Left cardiac atrium (tissue), 4 donors: ENCODE measurements at regions of chr3 and their contacts with region 1.

Region 1: DNA sequence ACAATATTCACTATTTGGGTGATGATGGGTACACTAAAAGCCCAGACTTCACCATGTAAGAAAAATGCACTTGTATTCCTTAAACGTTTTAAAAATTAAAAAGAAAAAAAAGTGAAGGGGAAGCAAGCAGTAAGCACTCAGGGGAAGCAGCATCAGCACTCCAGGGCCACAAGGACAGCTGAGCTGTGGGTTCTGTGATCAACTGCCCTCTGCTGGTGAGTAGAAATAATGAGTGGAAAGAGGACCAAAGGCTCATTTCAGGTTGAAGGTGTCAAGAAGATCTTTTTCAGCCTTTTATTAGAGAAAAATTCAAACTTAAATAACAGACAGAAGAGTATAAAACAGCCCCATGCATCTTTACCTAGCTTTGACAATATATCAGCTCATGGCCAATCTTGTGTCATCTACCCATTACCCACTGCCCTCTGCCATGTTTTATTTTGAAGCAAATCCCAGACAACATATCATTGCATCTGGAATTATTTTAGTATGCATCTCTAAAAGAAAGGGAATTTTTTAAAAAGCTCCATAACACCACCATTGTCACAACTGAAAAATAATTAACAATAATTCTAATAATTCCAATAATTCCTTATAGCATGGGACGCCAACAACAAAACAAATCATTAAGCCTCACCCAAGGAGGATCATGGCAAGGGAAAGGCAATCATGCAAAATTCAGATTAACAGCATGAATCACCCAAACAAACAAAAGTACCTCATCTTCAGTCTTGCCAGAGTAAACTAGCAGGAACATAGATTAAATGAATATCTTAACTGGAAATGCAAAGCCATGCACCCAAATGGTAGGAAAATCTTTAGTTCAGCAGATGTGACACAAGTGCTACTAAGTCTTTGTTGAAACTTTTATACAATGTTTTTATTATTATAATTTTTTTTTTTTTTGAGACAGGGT is 42.5 kb downstream of the TAMM41 start:
- DNase-seq: peak; percentile 34
- ATAC-seq: peak; percentile 50 to 78

Region 2: GRCh38 chr3:11379233-11379823 is 424.9 kb before region 1 on chr3:
- intact Hi-C with region 1: loop called (anchors 2 to 5 kb)
- DNase-seq: no peak
- ATAC-seq: peak; percentile 70 to 78

Region 3: DNA sequence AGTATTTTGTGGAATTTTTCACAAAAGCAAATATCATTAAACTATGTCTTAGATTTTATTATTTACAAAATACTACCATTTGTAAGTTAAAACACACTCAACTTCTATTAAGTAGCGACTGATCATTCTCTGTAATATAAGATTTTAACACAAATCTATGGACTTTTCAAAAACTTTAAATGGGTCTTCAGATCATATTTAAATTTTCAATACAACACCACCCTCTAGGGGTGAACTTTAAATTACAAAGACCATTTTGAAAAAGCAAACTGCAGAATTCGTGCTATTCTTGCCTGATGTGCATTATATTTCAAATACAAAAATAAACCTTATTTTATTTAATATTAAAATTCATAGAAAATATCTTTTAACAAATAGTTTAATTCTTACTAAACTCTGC is 152.3 kb before region 1 on chr3:
- intact Hi-C with region 1: loop called in 1 of 2 experiments (anchors 5 kb)
- DNase-seq: no peak
- ATAC-seq: peak in 1 of 2 donors; percentile 27

Region 4: DNA sequence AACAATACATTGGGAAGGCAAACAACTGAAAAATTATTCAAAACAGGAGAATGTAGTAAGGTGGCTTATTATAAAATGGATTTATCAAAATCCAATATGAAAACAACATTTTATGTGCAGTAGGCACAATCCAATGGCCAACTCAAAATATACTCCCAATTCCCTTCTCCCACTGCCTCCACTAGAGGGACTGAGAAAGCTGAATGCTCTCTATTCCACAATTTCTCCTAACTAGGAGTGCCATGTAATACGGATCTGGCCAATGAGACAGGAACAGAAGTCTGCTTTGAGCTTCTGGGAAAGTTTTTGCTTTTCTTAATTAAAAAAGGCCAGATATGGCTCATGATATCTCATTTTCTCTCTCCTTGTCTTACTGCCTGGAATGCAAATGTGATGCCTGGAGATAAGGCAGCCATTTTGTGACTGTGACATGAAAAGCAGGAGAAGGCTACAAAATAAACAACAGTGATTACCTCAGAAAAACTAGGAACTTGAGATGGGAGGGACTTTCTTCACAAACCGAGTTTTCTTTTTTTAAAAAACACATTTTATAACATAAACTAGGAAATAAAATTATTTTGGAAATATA is 141.7 kb before region 1 on chr3:
- intact Hi-C with region 1: loop called in 1 of 2 experiments (anchors 10 kb)
- DNase-seq: no peak
- ATAC-seq: peak in 1 of 2 donors; percentile 65

Region 5: GRCh38 chr3:12395349-12396012 is 591.2 kb after region 1 on chr3:
- intact Hi-C with region 1: no loop called
- DNase-seq: no peak
- ATAC-seq: no peak